CD14-positive monocyte (primary cell): ENCODE measurements at regions of chr3 and their contacts with region 1.

Region 1: DNA sequence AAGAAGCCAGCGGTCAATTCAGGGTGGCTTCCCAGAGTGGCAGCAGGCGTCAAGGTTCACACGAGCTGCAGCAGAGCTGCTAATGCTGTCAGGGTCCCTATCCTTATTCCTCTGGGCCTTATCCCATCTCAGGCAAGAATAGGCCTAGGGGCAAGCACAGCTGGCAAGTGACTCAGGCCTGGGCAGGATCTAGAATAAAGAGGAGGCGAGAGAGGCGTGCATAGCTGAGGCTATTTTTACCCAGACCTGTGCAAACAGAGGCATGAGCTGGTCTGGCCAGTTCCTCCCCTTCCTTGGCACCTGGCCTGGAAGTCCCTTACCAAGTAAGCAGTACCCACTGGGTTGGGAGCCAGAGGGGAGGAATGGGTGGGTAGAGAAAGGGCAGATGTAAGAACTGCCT is 12.2 kb upstream of the VIPR1 start:
- DNase-seq: peak; percentile 78 to 82 (median 82)
- H3K4me3 ChIP-seq: peak overlapping the region in 1 of 3 experiments; percentile 29
- H3K4me3 Mint-ChIP-seq: peak overlapping the region in 1 of 2 donors; percentile 42
- H3K27ac ChIP-seq: peak overlapping the region; percentile 51 to 86
- H3K27ac Mint-ChIP-seq: peak overlapping the region; percentile 55 to 90 (median 81)
- H3K4me1 ChIP-seq: peaks cover 64 to 73% of the 10 kb centered on the region in 2 donors
- H3K4me1 Mint-ChIP-seq: peaks cover 60% of the 10 kb centered on the region
- H3K27me3 ChIP-seq: no peaks in the 10 kb centered on the region
- H3K27me3 Mint-ChIP-seq: peaks cover 3 to 6% (median 4%) of the 10 kb centered on the region in 3 donors
- CTCF ChIP-seq: no peak

Region 2: GRCh38 chr3:42749753-42750231 is 259.5 kb after region 1 on chr3:
- intact Hi-C with region 1: loop called in 1 of 2 experiments (anchors 10 kb)
- DNase-seq: peak; percentile 41 to 61 (median 54)
- H3K4me3 ChIP-seq: no peak overlapping the region
- H3K4me3 Mint-ChIP-seq: no peak overlapping the region
- H3K27ac ChIP-seq: no peak overlapping the region
- H3K27ac Mint-ChIP-seq: peak overlapping the region in 4 of 7 donors; percentile 6 to 84 (median 58)
- H3K4me1 ChIP-seq: peaks cover 22 to 32% of the 10 kb centered on the region in 2 donors
- H3K4me1 Mint-ChIP-seq: peaks cover 34% of the 10 kb centered on the region
- H3K27me3 ChIP-seq: no peaks in the 10 kb centered on the region
- H3K27me3 Mint-ChIP-seq: peaks cover 0 to 3% (median 2%) of the 10 kb centered on the region in 3 donors
- CTCF ChIP-seq: peak; percentile 80

Region 3: DNA sequence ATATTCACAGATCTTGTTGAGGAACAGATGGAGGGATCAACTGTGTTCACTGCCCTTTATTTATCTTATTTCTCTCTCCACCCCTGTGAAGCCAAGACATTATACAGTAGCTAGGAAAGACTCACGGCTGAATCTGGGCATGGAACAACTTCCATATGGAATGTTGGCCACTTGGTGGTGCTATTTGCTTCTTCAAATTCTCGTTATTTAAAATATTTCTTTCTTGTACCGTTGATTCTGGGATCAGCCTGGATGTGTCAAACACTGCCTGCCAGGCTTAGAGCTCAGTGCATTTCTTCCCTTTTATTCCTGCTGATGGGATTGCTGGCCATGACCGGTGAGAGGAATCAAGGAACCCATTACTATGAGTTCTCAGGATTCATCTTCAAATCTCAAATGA is 471.4 kb after region 1 on chr3:
- intact Hi-C with region 1: no loop called
- DNase-seq: peak in 2 of 3 donors; percentile 4 to 8
- H3K4me3 ChIP-seq: no peak overlapping the region
- H3K4me3 Mint-ChIP-seq: no peak overlapping the region
- H3K27ac ChIP-seq: no peak overlapping the region
- H3K27ac Mint-ChIP-seq: no peak overlapping the region
- H3K4me1 ChIP-seq: no peaks in the 10 kb centered on the region
- H3K4me1 Mint-ChIP-seq: no peaks in the 10 kb centered on the region
- H3K27me3 ChIP-seq: no peaks in the 10 kb centered on the region
- H3K27me3 Mint-ChIP-seq: peaks cover 0 to 7% (median 1%) of the 10 kb centered on the region in 3 donors
- CTCF ChIP-seq: peak; percentile 46